ENCODE measurements at regions of chr3 and their contacts with region 1.

Region 1: GRCh38 chr3:133040696-133041523 is 2.7 kb downstream of the TMEM108 start:
- DNase-seq: peak; percentile 84
- H3K4me3 Mint-ChIP-seq: no peak overlapping the region
- H3K27ac Mint-ChIP-seq: no peak overlapping the region
- H3K4me1 Mint-ChIP-seq: no peaks in the 10 kb centered on the region
- H3K27me3 Mint-ChIP-seq: peaks cover 91% of the 10 kb centered on the region
- CTCF ChIP-seq: peak; percentile 79

Region 2: DNA sequence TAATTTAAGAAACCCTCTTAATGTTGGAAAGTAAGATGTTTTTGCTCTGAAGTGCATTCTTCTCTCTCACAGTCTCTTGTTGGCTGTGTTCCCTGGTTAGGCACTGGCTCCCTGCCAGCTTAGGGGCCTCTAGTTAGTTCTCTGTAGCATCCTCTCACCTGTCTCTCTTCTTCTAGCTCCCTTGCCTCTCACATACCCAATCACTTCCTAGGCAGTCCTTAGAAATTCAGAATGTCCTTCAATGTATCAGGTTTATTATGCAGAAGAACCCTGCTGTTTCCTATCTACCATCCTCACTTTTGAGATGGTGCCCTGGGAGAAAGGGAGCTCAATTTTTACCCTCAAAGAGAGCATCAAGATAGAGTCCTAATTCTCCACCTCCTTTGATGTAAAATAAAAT is 969.9 kb before region 1 on chr3:
- CTCF ChIA-PET with region 1: no interaction called
- POLR2A ChIA-PET with region 1: no interaction called
- intact Hi-C with region 1: no loop called
- DNase-seq: peak; percentile 39
- H3K4me3 Mint-ChIP-seq: no peak overlapping the region
- H3K27ac Mint-ChIP-seq: no peak overlapping the region
- H3K4me1 Mint-ChIP-seq: no peaks in the 10 kb centered on the region
- H3K27me3 Mint-ChIP-seq: no peaks in the 10 kb centered on the region
- CTCF ChIP-seq: no peak

Region 3: GRCh38 chr3:133021206-133021605 is 19.7 kb before region 1 on chr3:
- CTCF ChIA-PET with region 1: interaction called, 14 read pairs
- POLR2A ChIA-PET with region 1: no interaction called
- intact Hi-C with region 1: no loop called
- DNase-seq: no peak
- H3K4me3 Mint-ChIP-seq: no peak overlapping the region
- H3K27ac Mint-ChIP-seq: no peak overlapping the region
- H3K4me1 Mint-ChIP-seq: no peaks in the 10 kb centered on the region
- H3K27me3 Mint-ChIP-seq: peaks cover 48% of the 10 kb centered on the region
- CTCF ChIP-seq: no peak

Region 4: DNA sequence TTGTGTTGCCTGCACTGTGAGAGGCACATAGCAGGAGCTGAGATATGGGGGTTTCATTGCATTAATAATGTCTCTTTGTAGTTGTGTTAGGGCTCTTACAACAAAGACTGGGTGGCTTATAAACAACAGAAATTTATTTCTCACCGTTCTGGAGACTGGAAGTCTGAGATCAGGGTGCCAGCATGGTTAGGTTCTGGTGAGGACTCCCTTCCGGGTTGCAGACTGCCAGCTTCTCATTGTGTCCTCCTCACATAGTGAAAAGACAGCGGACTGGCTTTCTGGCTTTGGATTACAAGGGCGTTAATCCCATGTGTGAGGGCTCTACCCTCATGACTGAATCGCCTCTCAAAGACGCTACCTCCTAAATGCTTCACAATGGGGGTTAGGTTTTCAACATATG is 17.9 kb after region 1 on chr3:
- CTCF ChIA-PET with region 1: interaction called, 14 read pairs
- POLR2A ChIA-PET with region 1: interaction called, 3 read pairs
- intact Hi-C with region 1: no loop called
- DNase-seq: no peak
- H3K4me3 Mint-ChIP-seq: no peak overlapping the region
- H3K27ac Mint-ChIP-seq: no peak overlapping the region
- H3K4me1 Mint-ChIP-seq: no peaks in the 10 kb centered on the region
- H3K27me3 Mint-ChIP-seq: peaks cover 47% of the 10 kb centered on the region
- CTCF ChIP-seq: no peak

Region 5: GRCh38 chr3:133377396-133377795 is 336.5 kb after region 1 on chr3:
- CTCF ChIA-PET with region 1: interaction called, 151 read pairs
- POLR2A ChIA-PET with region 1: interaction called, 5 read pairs
- intact Hi-C with region 1: loop called (anchors 1 kb)
- DNase-seq: peak; percentile 64
- H3K4me3 Mint-ChIP-seq: no peak overlapping the region
- H3K27ac Mint-ChIP-seq: no peak overlapping the region
- H3K4me1 Mint-ChIP-seq: no peaks in the 10 kb centered on the region
- H3K27me3 Mint-ChIP-seq: peaks cover 17% of the 10 kb centered on the region
- CTCF ChIP-seq: peak; percentile 31

Region 6: DNA sequence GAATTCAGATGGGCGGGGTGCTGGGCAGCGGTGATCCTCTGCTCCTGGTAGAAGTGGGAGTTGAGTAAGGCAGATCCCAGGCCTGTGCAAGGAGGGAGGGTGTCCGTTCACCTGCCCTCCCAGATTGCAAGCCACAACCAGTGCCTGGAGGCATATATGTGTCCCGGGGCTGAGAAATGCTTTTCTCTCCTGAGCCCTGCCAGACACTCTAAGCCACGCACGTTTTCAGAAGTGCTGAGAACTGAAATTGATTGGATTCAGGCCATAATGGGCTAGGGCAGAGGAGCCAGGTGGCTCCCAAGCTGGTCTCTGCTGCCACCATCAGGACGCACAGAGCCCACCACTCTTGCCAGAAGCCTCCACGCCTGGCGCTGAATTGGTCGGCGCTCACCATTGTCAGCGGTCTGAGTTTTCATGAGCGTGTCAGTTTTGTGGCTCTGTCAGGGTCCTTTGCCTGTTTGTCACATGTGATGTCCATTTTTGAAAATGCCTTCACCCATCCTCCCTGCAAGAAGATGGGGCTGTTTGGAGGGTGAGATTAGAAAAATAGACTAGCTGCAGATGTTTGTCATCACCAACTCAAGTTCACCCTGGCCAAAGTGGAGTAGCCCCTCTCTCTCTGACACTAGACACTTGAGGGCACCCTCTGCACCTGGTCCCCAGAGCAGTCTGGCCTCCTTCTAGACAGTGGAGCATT is 343.6 kb after region 1 on chr3:
- CTCF ChIA-PET with region 1: interaction called, 151 read pairs
- POLR2A ChIA-PET with region 1: interaction called, 5 read pairs
- intact Hi-C with region 1: loop called (anchors 1 kb)
- DNase-seq: peak; percentile 77
- H3K4me3 Mint-ChIP-seq: no peak overlapping the region
- H3K27ac Mint-ChIP-seq: no peak overlapping the region
- H3K4me1 Mint-ChIP-seq: peaks cover 17% of the 10 kb centered on the region
- H3K27me3 Mint-ChIP-seq: peaks cover 21% of the 10 kb centered on the region
- CTCF ChIP-seq: peak; percentile 76

Region 7: GRCh38 chr3:133426721-133427120 is 385.8 kb after region 1 on chr3:
- CTCF ChIA-PET with region 1: interaction called, 41 read pairs
- POLR2A ChIA-PET with region 1: no interaction called
- intact Hi-C with region 1: loop called (anchors 1 kb)
- DNase-seq: no peak
- H3K4me3 Mint-ChIP-seq: no peak overlapping the region
- H3K27ac Mint-ChIP-seq: no peak overlapping the region
- H3K4me1 Mint-ChIP-seq: no peaks in the 10 kb centered on the region
- H3K27me3 Mint-ChIP-seq: no peaks in the 10 kb centered on the region
- CTCF ChIP-seq: no peak

Measured in MCF 10A (cell line).